ENCODE measurements at regions of chr17 and their contacts with region 1.

Region 1: DNA sequence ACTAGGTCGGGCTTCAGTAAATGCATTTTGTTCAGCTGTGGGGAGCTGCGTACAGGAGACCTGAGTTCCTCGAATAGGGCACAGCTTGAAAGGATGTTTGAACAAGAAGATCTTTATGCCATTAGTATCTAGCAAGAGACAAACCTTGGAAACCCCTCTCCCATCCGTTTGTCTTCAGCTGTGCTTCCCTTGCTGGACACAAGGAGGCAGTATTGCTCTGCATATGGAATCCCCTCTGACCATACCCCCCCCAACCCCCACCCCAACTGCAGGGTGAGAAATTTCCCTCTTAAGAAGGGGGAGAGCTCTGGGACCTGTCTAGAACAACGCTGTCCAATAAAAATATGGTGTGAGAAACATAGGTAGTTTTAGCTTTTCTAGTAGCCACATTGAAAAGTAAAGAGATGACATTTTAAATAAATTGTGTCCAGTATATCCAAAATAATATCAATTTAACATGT is 1.6 kb downstream of the MRM1 start:
- DNase-seq: peak; percentile 56
- ATAC-seq: peak; percentile 19; the same call in 1 of the 2 replicates
- H3K4me3 ChIP-seq: peak overlapping the region; percentile 74 to 78
- H3K27ac ChIP-seq: peak overlapping the region; percentile 86
- H3K4me1 ChIP-seq: peaks cover 7% of the 10 kb centered on the region; the same call in 1 of the 2 replicates
- H3K27me3 ChIP-seq: no peaks in the 10 kb centered on the region
- CTCF ChIP-seq: peak; percentile 78

Region 2: GRCh38 chr17:36205637-36206485 is 397.1 kb before region 1 on chr17:
- CTCF ChIA-PET with region 1: no interaction called
- POLR2A ChIA-PET with region 1: no interaction called
- in situ Hi-C with region 1: no loop called
- intact Hi-C with region 1: no loop called
- DNase-seq: no peak
- ATAC-seq: no peak
- H3K4me3 ChIP-seq: no peak overlapping the region
- H3K27ac ChIP-seq: no peak overlapping the region
- H3K4me1 ChIP-seq: no peaks in the 10 kb centered on the region
- H3K27me3 ChIP-seq: no peaks in the 10 kb centered on the region; the same call in 1 of the 2 replicates
- CTCF ChIP-seq: no peak

Region 3: DNA sequence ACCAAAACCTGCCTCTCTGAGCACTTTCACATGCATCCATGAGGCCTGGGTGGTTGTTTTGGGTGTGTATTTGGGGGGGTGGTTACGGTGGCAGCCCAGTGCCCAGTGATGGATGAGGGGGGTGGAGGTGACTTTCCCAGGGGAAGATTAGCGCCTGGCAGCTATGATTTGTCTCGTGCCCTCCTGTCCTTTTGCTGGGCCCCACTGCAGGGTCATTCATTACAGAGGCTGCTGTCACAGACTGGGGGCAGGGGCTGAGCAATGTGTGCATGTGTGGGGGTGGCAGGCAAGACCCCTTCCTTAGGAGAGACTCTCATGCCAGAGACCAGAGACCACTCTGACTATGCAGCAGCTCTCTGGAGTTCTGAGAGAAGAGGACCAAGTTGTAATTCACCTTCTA is 92.1 kb after region 1 on chr17:
- CTCF ChIA-PET with region 1: no interaction called
- POLR2A ChIA-PET with region 1: no interaction called
- in situ Hi-C with region 1: no loop called
- intact Hi-C with region 1: no loop called
- DNase-seq: no peak
- ATAC-seq: no peak
- H3K4me3 ChIP-seq: no peak overlapping the region
- H3K27ac ChIP-seq: no peak overlapping the region
- H3K4me1 ChIP-seq: no peaks in the 10 kb centered on the region
- H3K27me3 ChIP-seq: peaks cover 2% of the 10 kb centered on the region; the same call in 1 of the 2 replicates
- CTCF ChIP-seq: no peak

Region 4: DNA sequence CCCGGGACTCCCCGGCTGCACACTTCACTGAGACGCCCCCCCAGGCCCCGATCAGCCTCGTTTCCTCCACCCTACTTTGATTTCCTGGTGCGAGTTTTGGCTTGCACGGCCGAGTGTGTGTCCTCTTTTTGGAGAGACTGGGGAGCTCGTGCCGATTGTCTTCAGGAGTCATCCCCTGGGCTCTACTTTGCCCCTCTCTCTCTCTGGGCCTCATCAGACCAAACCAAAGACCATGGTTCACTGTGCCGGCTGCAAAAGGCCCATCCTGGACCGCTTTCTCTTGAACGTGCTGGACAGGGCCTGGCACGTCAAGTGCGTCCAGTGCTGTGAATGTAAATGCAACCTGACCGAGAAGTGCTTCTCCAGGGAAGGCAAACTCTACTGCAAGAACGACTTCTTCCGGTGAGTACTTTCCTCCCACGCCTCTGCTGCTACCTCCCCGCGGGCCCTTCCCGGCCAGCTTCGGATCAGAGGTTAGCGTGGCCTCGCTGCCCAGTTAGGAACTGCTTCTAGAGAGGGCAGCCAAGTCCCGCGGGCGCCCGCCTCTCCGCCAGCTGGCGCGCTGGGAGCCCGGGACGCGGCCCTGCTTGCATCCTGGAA is 335.1 kb after region 1 on chr17:
- CTCF ChIA-PET with region 1: interaction called, 10 read pairs
- POLR2A ChIA-PET with region 1: no interaction called
- in situ Hi-C with region 1: no loop called
- intact Hi-C with region 1: no loop called
- DNase-seq: no peak
- ATAC-seq: peak; percentile 25
- H3K4me3 ChIP-seq: peak overlapping the region; percentile 64 to 84
- H3K27ac ChIP-seq: peak overlapping the region; percentile 84
- H3K4me1 ChIP-seq: peaks cover 3% of the 10 kb centered on the region; the same call in 1 of the 2 replicates
- H3K27me3 ChIP-seq: no peaks in the 10 kb centered on the region
- CTCF ChIP-seq: no peak